Mammary epithelial cell (primary cell): ENCODE measurements at regions of chr19 and their contacts with region 1.

Region 1: GRCh38 chr19:12564016-12564664 is 12.9 kb upstream of the ZNF564 start:
- DNase-seq: peak; percentile 88
- H3K4me3 ChIP-seq: no peak overlapping the region
- H3K27ac ChIP-seq: no peak overlapping the region
- H3K4me1 ChIP-seq: no peaks in the 10 kb centered on the region
- H3K27me3 ChIP-seq: no peaks in the 10 kb centered on the region
- CTCF ChIP-seq: peak; percentile 96 to 97

Region 2: GRCh38 chr19:12055783-12056182 is 508.4 kb before region 1 on chr19:
- CTCF ChIA-PET with region 1: no interaction called
- dilution Hi-C with region 1: no loop called
- in situ Hi-C with region 1: no loop called
- intact Hi-C with region 1: loop called (anchors 1 kb)
- DNase-seq: no peak
- H3K4me3 ChIP-seq: no peak overlapping the region
- H3K27ac ChIP-seq: no peak overlapping the region
- H3K4me1 ChIP-seq: peaks cover 4% of the 10 kb centered on the region
- H3K27me3 ChIP-seq: peaks cover 2% of the 10 kb centered on the region
- CTCF ChIP-seq: no peak

Region 3: GRCh38 chr19:12628040-12629022 is 64.2 kb after region 1 on chr19:
- CTCF ChIA-PET with region 1: no interaction called
- dilution Hi-C with region 1: loop called (anchors 5 kb)
- in situ Hi-C with region 1: no loop called
- intact Hi-C with region 1: no loop called
- DNase-seq: peak; percentile 20
- H3K4me3 ChIP-seq: no peak overlapping the region
- H3K27ac ChIP-seq: no peak overlapping the region
- H3K4me1 ChIP-seq: no peaks in the 10 kb centered on the region
- H3K27me3 ChIP-seq: no peaks in the 10 kb centered on the region
- CTCF ChIP-seq: no peak

Region 4: DNA sequence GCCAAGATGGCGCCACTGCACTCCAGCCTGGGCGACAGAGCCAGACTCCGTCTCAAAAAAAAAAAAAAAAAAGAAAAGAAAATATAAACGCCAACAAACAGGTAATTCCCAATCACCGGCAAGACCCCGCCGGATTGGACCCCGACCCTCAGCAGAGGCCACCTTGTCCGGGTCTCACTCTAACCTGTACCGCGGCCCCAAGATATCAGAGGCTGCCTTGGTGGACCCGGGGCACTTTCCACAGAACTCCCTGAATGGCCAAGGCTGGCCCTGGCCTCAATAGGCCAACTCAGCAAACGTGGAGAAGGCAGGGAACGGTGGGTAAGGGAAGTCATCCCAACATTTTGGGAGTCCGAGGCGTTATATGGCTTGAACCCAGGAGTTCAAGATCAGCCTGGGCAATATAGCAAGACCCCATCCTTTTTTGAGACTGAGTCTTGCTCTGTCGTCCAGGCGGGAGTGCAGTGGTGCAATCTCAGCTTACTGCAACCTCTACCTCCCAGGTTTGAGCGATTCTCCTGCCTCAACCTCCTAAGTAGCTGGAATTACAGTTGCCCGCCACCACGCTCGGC is 74.6 kb after region 1 on chr19:
- CTCF ChIA-PET with region 1: no interaction called
- dilution Hi-C with region 1: no loop called
- in situ Hi-C with region 1: no loop called
- intact Hi-C with region 1: no loop called
- DNase-seq: no peak
- H3K4me3 ChIP-seq: no peak overlapping the region
- H3K27ac ChIP-seq: no peak overlapping the region
- H3K4me1 ChIP-seq: no peaks in the 10 kb centered on the region
- H3K27me3 ChIP-seq: no peaks in the 10 kb centered on the region
- CTCF ChIP-seq: no peak